HAP-1 (cell line): ENCODE measurements at regions of chr5 and their contacts with region 1.

Region 1: DNA sequence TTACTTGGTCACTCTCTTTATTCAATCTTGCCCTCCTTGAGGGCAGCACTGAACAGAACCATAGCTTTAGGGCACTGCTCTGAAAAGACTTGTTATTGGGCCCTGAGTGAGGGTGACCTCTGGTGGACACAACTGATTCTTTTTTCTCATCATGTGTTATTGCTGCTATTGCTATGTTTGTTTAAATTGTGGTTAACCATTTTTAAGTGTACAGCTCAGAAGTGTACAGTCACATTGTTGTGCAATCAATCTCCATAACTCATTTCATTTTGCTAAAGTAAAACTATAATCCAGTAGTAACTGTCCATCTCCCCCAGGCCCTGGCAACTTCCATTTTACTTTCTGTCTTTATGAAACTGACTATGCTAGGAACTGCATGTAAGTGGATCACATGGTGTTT is 351.1 kb upstream of the RIOK2 start:
- DNase-seq: peak; percentile 75 to 77
- H3K4me3 ChIP-seq: no peak overlapping the region
- H3K4me1 ChIP-seq: peaks cover 27% of the 10 kb centered on the region
- H3K27me3 ChIP-seq: no peaks in the 10 kb centered on the region

Region 2: GRCh38 chr5:97118261-97119006 is 415.7 kb before region 1 on chr5:
- in situ Hi-C with region 1: no loop called
- DNase-seq: no peak
- H3K4me3 ChIP-seq: no peak overlapping the region
- H3K4me1 ChIP-seq: peaks cover 3% of the 10 kb centered on the region
- H3K27me3 ChIP-seq: 0 out of 2 replicates have a peak, but pooled peaks cover 2% of the 10 kb centered on the region

Region 3: GRCh38 chr5:97297063-97297703 is 237.0 kb before region 1 on chr5:
- in situ Hi-C with region 1: loop called (anchors 25 kb)
- DNase-seq: peak; percentile 74 to 77
- H3K4me3 ChIP-seq: no peak overlapping the region
- H3K4me1 ChIP-seq: no peaks in the 10 kb centered on the region
- H3K27me3 ChIP-seq: no peaks in the 10 kb centered on the region

Region 4: DNA sequence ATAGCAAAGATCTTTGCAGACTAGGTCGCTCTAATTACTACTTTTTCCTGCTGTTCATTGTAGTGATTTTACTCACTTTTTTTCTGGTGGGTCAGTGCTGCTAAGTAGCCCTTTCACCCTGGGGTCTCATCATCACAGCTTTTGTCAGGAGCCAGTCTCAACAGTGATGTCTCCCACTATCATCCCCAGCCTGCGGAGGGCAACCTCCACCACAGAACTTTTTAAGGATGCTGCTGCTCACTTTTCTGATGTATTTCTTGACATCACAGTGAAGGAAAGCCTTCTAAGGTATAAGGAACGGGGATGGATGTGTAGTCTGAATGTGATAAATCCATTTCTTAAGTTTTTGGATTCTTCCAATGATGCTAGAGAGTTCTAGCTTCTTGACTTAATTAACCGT is 108.7 kb before region 1 on chr5:
- in situ Hi-C with region 1: loop called (anchors 10 kb)
- DNase-seq: peak in 1 of 2 experiments; percentile 60
- H3K4me3 ChIP-seq: no peak overlapping the region
- H3K4me1 ChIP-seq: no peaks in the 10 kb centered on the region
- H3K27me3 ChIP-seq: no peaks in the 10 kb centered on the region